Activated CD4-positive, alpha-beta memory T cell treated with anti-CD3 and anti-CD28 coated beads for 36 hours (primary cell): ENCODE measurements at regions of chr11 and their contacts with region 1.

Region 1: DNA sequence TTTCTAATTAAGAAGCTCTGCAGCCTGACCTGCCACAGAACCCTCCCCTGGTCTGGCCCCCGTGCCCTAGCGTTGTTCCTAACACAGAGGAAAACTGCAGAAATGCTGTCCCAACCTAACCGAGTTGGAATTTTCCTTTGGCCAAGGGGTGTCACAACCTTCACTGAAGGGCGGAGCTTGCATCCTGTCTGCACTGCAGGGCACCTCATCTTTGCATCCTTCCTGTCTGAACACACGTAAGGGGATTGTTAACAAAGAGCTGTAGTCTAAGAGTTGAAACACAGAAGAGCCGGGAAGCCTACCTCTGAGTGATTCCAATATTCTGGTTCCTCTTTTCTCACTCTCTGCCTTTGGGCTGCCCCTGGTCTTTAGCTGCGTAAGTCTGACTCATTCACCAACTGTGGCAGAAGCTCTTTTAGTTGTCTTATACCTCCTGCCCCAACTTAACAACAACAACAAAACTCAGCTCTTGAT is 1.6 kb downstream of the DIXDC1 start:
- DNase-seq: peak; percentile 72
- H3K4me3 Mint-ChIP-seq: peak overlapping the region; percentile 77
- H3K27ac Mint-ChIP-seq: peak overlapping the region; percentile 88
- H3K4me1 Mint-ChIP-seq: peaks cover 55% of the 10 kb centered on the region
- H3K27me3 Mint-ChIP-seq: no peaks in the 10 kb centered on the region

Region 2: GRCh38 chr11:111378861-111379601 is 559.7 kb before region 1 on chr11 and contains the start of gene POU2AF1:
- CTCF ChIA-PET with region 1: no interaction called
- POLR2A ChIA-PET with region 1: no interaction called
- intact Hi-C with region 1: loop called (anchors 10 kb)
- DNase-seq: peak; percentile 88
- H3K4me3 Mint-ChIP-seq: peak within 1 kb of the TSS; percentile 62
- H3K27ac Mint-ChIP-seq: peak within 1 kb of the TSS; percentile 86
- H3K4me1 Mint-ChIP-seq: peaks cover 51% of the 10 kb centered on the region
- H3K27me3 Mint-ChIP-seq: no peaks in the 10 kb centered on the region
- total RNA-seq, gene POU2AF1: 26.9 to 28.3 TPM

Region 3: DNA sequence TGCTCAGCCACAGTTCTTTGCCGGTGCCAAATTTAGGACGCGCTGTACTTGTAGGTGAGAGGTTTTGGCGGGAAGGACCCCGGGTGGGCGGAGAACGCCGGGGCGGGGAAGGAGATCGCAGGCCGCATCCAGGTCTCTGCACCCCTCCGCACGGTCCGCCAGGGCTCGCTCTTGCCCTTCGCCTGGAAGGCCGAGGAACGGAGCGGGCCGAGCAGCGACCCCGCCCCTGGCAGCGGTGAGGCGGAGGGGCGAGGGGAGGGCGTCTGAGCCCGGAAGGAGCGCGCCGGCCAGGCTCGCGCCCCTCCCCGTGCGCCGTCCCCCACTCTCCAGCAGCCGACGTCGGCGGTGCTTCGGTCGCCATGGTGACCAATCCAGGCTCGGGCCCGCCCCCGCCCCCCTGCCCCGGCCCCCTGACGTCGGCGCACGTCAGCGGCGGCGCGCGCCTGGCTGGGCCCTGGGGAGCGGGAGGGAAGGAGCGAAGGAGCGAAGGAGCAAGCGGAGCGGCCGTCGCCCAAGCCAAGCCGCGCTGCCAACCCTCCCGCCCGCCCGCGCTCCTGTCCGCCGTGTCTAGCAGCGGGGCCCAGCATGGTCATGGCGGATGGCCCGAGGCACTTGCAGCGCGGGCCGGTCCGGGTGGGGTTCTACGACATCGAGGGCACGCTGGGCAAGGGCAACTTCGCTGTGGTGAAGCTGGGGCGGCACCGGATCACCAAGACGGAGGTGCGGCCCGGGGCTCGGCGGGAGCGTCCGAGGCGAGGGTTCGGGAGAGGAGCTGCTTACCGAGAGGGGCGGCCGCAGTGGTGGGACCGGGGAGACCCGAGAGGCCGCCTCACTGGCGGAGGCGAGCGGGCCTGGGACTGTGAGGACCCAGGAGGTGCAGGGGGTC is 336.5 kb before region 1 on chr11 and contains the start of gene SIK2:
- CTCF ChIA-PET with region 1: no interaction called
- POLR2A ChIA-PET with region 1: no interaction called
- intact Hi-C with region 1: no loop called
- DNase-seq: peak; percentile 93
- H3K4me3 Mint-ChIP-seq: peak within 1 kb of the TSS; percentile 91
- H3K27ac Mint-ChIP-seq: peak within 1 kb of the TSS; percentile 77
- H3K4me1 Mint-ChIP-seq: peaks cover 30% of the 10 kb centered on the region
- H3K27me3 Mint-ChIP-seq: no peaks in the 10 kb centered on the region
- total RNA-seq, gene SIK2: 4.6 to 6.2 TPM

Region 4: GRCh38 chr11:111886844-111887243 is 51.9 kb before region 1 on chr11:
- CTCF ChIA-PET with region 1: no interaction called
- POLR2A ChIA-PET with region 1: no interaction called
- intact Hi-C with region 1: no loop called
- DNase-seq: no peak
- H3K4me3 Mint-ChIP-seq: no peak overlapping the region
- H3K27ac Mint-ChIP-seq: no peak overlapping the region
- H3K4me1 Mint-ChIP-seq: no peaks in the 10 kb centered on the region
- H3K27me3 Mint-ChIP-seq: no peaks in the 10 kb centered on the region

Region 5: GRCh38 chr11:111982019-111982464 is 43.3 kb after region 1 on chr11:
- CTCF ChIA-PET with region 1: interaction called, 190 read pairs
- POLR2A ChIA-PET with region 1: interaction called, 7 read pairs
- intact Hi-C with region 1: no loop called
- DNase-seq: peak; percentile 72
- H3K4me3 Mint-ChIP-seq: no peak overlapping the region
- H3K27ac Mint-ChIP-seq: no peak overlapping the region
- H3K4me1 Mint-ChIP-seq: peaks cover 10% of the 10 kb centered on the region
- H3K27me3 Mint-ChIP-seq: peaks cover 18% of the 10 kb centered on the region

Region 6: GRCh38 chr11:112057170-112057569 is 118.4 kb after region 1 on chr11:
- CTCF ChIA-PET with region 1: no interaction called
- POLR2A ChIA-PET with region 1: no interaction called
- intact Hi-C with region 1: loop called (anchors 1 kb)
- DNase-seq: peak; percentile 29
- H3K4me3 Mint-ChIP-seq: peak overlapping the region; percentile 33
- H3K27ac Mint-ChIP-seq: peak overlapping the region; percentile 69
- H3K4me1 Mint-ChIP-seq: peaks cover 23% of the 10 kb centered on the region
- H3K27me3 Mint-ChIP-seq: no peaks in the 10 kb centered on the region

Region 7: DNA sequence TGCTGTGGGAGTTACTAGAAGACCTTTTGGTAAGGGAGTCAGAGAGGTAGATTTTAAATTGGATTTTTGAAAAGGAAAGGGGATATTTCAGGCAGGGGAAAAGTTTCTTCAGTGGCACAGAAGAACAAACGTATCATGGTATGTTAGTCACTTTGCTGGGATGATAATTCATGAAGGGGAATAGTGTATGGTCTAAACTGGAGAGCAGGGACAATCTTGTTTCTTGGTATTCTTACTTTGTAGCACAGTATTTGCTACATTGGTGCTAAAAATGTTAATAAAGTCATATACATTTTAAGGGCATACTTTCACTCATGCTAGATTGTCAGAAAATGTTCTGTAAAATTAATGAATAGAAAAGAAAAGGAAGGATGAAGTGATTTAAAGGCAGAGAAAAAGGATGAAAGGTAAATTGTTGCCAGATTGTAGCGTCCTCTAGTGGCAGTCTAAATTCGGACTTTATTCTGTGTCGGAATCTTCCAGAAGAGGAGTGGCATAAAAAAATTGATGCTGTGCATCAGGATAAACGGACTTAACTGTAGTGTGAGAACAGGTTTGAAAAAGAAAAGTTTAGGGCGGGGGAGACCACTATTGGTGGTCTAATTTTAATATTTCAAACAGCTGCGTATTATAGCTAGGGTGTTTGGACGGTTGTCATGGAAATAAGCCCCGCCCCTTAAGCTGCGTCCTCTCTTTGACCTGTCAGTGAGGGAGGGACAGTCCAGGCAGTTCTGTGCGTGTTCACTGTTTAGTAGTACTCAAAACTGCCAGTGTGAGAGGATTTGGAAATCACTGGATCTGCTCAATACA is 236.3 kb after region 1 on chr11 and contains the start of gene BCO2:
- CTCF ChIA-PET with region 1: no interaction called
- POLR2A ChIA-PET with region 1: no interaction called
- intact Hi-C with region 1: loop called (anchors 10 kb)
- DNase-seq: peak; percentile 60
- H3K4me3 Mint-ChIP-seq: peak within 1 kb of the TSS; percentile 50
- H3K27ac Mint-ChIP-seq: no peak within 1 kb of the TSS
- H3K4me1 Mint-ChIP-seq: peaks cover 11% of the 10 kb centered on the region
- H3K27me3 Mint-ChIP-seq: peaks cover 16% of the 10 kb centered on the region
- total RNA-seq, gene BCO2: 0.73 to 1.3 TPM

Region 8: GRCh38 chr11:112401036-112401769 is 462.5 kb after region 1 on chr11:
- CTCF ChIA-PET with region 1: no interaction called
- POLR2A ChIA-PET with region 1: no interaction called
- intact Hi-C with region 1: no loop called
- DNase-seq: no peak
- H3K4me3 Mint-ChIP-seq: no peak overlapping the region
- H3K27ac Mint-ChIP-seq: no peak overlapping the region
- H3K4me1 Mint-ChIP-seq: no peaks in the 10 kb centered on the region
- H3K27me3 Mint-ChIP-seq: no peaks in the 10 kb centered on the region